T-cell (primary cell): ENCODE measurements at regions of chr4 and their contacts with region 1.

Region 1: GRCh38 chr4:13378973-13379759 is 105.0 kb downstream of the RAB28 start:
- DNase-seq: no peak
- ATAC-seq: no peak
- H3K4me3 ChIP-seq: no peak overlapping the region
- H3K4me3 Mint-ChIP-seq: no peak overlapping the region
- H3K27ac ChIP-seq: no peak overlapping the region
- H3K27ac Mint-ChIP-seq: no peak overlapping the region
- H3K4me1 ChIP-seq: no peaks in the 10 kb centered on the region
- H3K4me1 Mint-ChIP-seq: no peaks in the 10 kb centered on the region
- H3K27me3 ChIP-seq: no peaks in the 10 kb centered on the region
- H3K27me3 Mint-ChIP-seq: no peaks in the 10 kb centered on the region

Region 2: DNA sequence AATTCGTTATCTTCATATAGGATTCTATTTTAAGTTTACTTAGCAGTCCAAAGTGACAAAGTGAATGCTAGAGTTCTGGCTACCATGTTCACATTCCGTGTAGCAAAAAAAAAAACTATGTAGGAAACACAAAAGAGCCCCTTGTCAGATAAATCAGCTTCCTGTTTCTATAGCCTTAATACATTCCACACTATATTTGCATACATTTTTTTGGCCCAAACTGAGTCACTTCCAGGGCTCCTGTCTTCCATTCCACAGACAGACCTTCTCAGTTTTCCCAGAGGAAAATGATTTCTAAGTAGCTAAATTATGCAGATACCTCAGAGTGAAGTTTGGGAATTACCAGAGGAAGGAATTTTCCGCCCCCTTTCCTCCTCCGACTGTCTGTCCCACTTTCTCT is 1108.6 kb before region 1 on chr4:
- CTCF ChIA-PET with region 1: no interaction called
- POLR2A ChIA-PET with region 1: no interaction called
- DNase-seq: no peak
- ATAC-seq: no peak
- H3K4me3 ChIP-seq: no peak overlapping the region
- H3K4me3 Mint-ChIP-seq: no peak overlapping the region
- H3K27ac ChIP-seq: no peak overlapping the region
- H3K27ac Mint-ChIP-seq: no peak overlapping the region
- H3K4me1 ChIP-seq: no peaks in the 10 kb centered on the region
- H3K4me1 Mint-ChIP-seq: no peaks in the 10 kb centered on the region
- H3K27me3 ChIP-seq: no peaks in the 10 kb centered on the region
- H3K27me3 Mint-ChIP-seq: no peaks in the 10 kb centered on the region

Region 3: GRCh38 chr4:13193662-13194061 is 185.5 kb before region 1 on chr4:
- CTCF ChIA-PET with region 1: interaction called in 1 of 2 experiments, 13 read pairs
- POLR2A ChIA-PET with region 1: no interaction called
- DNase-seq: no peak
- ATAC-seq: no peak
- H3K4me3 ChIP-seq: no peak overlapping the region
- H3K4me3 Mint-ChIP-seq: no peak overlapping the region
- H3K27ac ChIP-seq: no peak overlapping the region
- H3K27ac Mint-ChIP-seq: no peak overlapping the region
- H3K4me1 ChIP-seq: no peaks in the 10 kb centered on the region
- H3K4me1 Mint-ChIP-seq: no peaks in the 10 kb centered on the region
- H3K27me3 ChIP-seq: no peaks in the 10 kb centered on the region
- H3K27me3 Mint-ChIP-seq: no peaks in the 10 kb centered on the region